ENCODE measurements at regions of chr14 and their contacts with region 1.

Region 1: GRCh38 chr14:91649930-91650329 is 82.0 kb downstream of the CATSPERB start:
- DNase-seq: no peak
- ATAC-seq: peak; percentile 37 to 41

Region 2: DNA sequence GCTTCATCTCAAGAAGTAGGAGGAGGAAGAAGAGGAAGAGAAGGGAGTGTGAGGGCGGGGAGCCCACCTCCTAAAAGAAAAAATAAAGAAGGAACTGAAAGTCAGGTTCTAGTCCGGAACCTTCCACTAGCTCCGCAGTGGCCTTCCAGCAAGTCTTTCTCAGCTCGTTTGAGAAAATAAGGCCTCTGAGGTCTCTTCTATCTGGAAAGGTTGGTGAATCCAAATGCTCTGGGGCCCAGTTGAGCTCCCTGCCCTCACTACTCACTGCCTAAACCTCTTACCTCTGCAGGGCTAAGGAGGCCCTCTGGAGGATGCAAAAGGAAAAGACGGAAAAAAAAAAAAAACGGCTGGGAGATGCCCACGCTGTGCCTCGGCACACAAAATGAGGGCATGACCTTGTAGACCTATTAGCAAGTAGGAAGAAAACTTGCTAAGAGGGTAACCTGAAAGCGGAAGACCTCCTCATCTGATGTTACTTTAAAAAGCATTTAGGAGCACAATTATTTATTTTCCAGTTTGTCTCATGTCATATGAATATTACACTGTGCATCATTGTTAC is 261.6 kb after region 1 on chr14:
- intact Hi-C with region 1: loop called (anchors 5 kb)
- DNase-seq: no peak
- ATAC-seq: peak; percentile 83 to 85

Measured in left cardiac atrium (tissue), 4 donors.